BJ (cell line): ENCODE measurements at regions of chr3 and their contacts with region 1.

Region 1: DNA sequence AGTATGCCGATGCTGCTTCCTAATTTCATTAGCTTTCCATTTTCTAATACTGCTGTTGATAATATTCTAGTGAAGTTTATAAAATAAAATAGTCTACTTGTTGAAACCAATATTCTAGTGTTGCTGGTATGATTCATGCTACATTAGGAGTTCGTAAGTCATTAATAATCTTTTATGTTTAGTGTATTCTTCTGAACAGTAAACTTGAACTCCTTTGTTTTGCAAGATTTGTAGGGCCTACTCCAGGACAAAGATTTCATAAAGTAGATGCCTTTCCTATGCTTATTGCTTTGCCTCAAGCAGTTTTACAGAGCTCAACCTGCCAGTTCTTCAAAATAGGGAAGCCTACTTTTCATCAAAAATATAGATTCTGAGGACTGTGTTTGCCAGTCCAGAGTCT is 111.5 kb downstream of the RSRC1 start:
- DNase-seq: no peak
- H3K4me3 ChIP-seq: no peak overlapping the region
- H3K27me3 ChIP-seq: no peaks in the 10 kb centered on the region
- CTCF ChIP-seq: no peak

Region 2: DNA sequence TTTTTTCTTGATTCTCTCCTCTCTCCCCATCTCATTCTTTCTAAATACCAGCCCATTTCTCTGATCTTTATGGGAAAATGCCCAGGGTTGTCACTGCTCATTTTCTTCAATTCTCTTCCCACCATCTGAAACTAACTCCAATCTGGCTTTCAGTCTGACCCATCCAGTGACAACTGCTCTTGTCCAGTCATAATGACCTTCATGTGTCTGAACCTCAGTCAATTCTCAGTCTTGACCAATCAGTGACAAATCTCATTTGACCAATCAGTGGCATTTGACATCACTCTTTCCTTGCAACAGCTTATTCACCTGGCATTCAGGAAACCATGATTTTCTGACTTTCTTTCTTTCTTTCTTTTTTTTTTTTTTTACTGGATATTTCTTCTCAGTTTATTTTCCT is 733.3 kb before region 1 on chr3:
- CTCF ChIA-PET with region 1: no interaction called
- POLR2A ChIA-PET with region 1: interaction called, 13 read pairs
- DNase-seq: no peak
- H3K4me3 ChIP-seq: no peak overlapping the region
- H3K27me3 ChIP-seq: no peaks in the 10 kb centered on the region
- CTCF ChIP-seq: no peak